Activated CD4-positive, alpha-beta memory T cell treated with anti-CD3 and anti-CD28 coated beads, Interleukin-2, amount 10 ng/mL, durations not matched to agents 7 days and 5 days (primary cell): ENCODE measurements at regions of chr16 and their contacts with region 1.

Region 1: DNA sequence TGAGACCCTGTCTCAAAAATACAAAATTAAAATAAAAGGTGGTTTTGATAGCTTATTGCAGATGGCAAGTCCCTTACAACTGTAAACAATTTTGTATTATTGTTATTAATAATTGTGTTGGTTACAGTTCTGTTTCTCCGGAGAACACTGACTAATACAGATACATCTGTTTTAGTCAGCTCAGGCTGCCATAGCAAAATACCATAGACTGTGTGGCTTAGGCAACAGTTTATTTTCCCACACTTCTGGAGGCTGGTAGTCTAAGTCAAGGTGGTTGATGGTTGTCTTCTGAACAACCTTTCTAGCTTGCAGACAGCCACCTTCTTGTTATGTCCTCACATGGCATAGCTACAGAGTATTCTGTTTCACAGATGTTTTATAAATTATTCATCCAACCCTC is 14.2 kb upstream of the IL21R start:
- DNase-seq: no peak
- H3K4me3 Mint-ChIP-seq: no peak overlapping the region
- H3K27ac Mint-ChIP-seq: no peak overlapping the region
- H3K4me1 Mint-ChIP-seq: peaks cover 27% of the 10 kb centered on the region
- H3K27me3 Mint-ChIP-seq: peaks cover 2% of the 10 kb centered on the region

Region 2: DNA sequence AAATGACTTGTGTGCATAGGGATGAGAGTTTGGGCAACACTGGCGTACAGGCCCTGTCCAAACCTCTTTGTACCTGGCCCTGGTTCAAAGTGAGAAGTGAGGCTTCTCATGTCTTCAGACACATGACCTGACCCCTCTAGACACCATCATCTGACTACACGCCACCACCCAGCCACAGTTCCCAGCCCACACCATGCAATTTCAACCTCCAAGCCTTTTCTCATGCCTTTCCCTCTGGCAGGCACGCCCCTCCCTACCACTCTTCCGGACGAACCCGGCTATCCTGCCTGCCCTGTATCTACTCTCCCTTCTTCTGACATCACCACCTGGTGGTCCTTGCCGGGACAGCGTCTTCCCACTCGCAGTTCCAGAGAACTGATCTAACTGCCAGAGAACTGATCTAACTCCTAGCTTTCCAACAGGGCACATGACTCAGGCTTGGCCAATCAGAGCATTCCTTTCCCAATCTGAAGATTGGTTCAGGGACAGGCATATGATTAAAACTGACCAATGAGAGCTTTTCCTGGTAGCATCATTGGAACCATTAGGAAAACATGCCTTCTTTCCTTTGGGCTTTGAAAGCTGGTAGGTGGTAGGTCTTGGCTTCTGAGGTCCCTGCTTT is 12.8 kb before region 1 on chr16:
- CTCF ChIA-PET with region 1: interaction called, 17 read pairs
- POLR2A ChIA-PET with region 1: interaction called, 13 read pairs
- DNase-seq: peak; percentile 52
- H3K4me3 Mint-ChIP-seq: no peak overlapping the region
- H3K27ac Mint-ChIP-seq: no peak overlapping the region
- H3K4me1 Mint-ChIP-seq: peaks cover 33% of the 10 kb centered on the region
- H3K27me3 Mint-ChIP-seq: no peaks in the 10 kb centered on the region